Heart left ventricle (tissue), 16 donors: ENCODE measurements at regions of chr6 and their contacts with region 1.

Region 1: DNA sequence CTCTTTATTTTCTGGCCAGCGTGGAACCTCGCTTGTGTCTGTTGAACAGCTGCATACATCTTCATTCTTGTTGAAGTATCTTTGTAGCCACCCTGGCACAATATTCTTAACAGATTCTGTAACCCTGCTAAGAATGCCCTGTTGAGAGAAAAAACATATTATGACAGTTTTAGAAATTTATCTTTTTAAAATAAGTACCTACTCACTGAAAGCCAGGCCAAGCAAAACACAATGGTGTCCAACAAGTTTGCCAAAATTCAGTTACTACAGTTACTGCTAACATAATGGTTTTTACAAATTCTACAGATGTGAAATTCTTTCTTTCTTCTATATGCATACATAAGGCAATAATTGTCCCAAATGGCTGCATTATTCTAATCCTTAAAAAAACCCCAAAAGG is 18.2 kb downstream of the NUP153 start:
- DNase-seq: no peak
- ATAC-seq: no peak
- H3K4me3 ChIP-seq: no peak overlapping the region
- H3K27ac ChIP-seq: no peak overlapping the region
- H3K4me1 ChIP-seq: peaks cover 0 to 29% (median 7%) of the 10 kb centered on the region in 12 donors
- H3K27me3 ChIP-seq: no peaks in the 10 kb centered on the region
- CTCF ChIP-seq: no peak
- POLR2A ChIP-seq: no peak

Region 2: GRCh38 chr6:16901782-16902181 is 786.7 kb before region 1 on chr6:
- intact Hi-C with region 1: no loop called
- DNase-seq: peak; percentile 22 to 69 (median 42)
- ATAC-seq: peak in 2 of 4 donors; percentile 75 to 80
- H3K4me3 ChIP-seq: no peak overlapping the region
- H3K27ac ChIP-seq: no peak overlapping the region
- H3K4me1 ChIP-seq: peaks cover 0 to 27% (median 0%) of the 10 kb centered on the region in 12 donors
- H3K27me3 ChIP-seq: no peaks in the 10 kb centered on the region
- CTCF ChIP-seq: no peak
- POLR2A ChIP-seq: no peak

Region 3: DNA sequence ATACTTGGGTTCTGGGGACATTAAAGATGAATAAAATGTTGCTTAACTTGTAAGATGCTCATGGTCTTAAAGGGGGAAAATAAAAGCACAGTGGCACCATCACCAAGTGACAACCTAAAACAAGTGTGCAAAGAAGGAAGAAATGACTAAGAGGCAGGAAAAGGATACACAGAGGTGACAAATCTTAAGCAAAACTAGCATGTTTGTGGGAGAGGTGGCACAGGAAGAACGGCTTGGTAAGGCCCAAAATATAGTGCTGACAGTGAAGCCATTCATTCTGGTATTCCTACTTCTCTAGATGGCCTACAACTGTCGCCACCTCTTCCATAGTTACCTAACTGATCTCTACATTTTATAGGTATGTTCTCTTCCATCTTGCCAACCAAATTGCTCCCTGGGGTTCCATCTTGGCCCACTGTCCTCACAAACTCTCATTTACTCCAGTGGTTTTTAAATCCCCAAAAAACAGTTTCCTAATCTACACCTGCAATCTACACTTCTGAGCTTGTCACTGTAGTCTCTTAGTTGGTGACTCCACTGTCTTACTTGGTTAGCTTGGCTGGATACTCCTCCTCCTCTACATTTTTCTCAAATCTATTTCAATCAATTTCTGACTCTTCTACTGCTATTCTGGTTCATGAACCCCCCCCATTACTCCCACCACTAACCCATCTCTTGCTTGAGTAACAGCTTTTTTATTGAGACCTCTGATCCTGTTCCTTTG is 54.9 kb before region 1 on chr6:
- intact Hi-C with region 1: loop called in 1 of 10 experiments (anchors 10 kb)
- DNase-seq: no peak
- ATAC-seq: no peak
- H3K4me3 ChIP-seq: no peak overlapping the region
- H3K27ac ChIP-seq: peak overlapping the region in 1 of 12 donors; percentile 11
- H3K4me1 ChIP-seq: peaks cover 0 to 41% (median 13%) of the 10 kb centered on the region in 12 donors
- H3K27me3 ChIP-seq: no peaks in the 10 kb centered on the region
- CTCF ChIP-seq: no peak
- POLR2A ChIP-seq: no peak